GM13977 (cell line): ENCODE measurements at regions of chrX and their contacts with region 1.

Region 1: DNA sequence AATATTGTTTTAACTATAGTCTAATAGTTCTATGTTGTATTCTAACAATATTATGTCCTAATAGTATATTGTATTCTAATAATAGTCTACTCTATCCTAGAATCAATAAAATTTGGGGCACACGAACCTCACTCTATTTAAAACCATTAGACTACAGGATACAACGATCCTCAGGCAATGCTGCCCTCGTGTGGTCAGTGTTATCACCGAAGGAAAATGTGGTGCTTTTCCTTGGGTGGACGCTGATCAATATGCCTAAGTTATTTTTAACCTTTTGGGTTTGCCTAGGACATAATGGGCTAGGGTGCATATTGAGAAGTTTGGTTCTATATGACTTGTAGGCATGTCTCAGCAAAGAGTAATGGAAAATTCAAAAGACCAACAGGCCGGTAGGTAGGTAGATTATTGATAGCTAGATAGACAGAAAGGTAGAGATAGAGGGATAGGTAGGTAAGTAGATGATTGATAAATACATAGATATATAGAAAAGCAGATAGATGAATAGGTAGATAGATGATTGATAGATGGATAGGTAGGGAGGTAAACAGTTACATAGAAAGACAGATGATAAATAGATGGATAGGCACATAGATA is 75.1 kb downstream of the PRKX start:
- DNase-seq: peak; percentile 74
- CTCF ChIP-seq: peak; percentile 76

Region 2: DNA sequence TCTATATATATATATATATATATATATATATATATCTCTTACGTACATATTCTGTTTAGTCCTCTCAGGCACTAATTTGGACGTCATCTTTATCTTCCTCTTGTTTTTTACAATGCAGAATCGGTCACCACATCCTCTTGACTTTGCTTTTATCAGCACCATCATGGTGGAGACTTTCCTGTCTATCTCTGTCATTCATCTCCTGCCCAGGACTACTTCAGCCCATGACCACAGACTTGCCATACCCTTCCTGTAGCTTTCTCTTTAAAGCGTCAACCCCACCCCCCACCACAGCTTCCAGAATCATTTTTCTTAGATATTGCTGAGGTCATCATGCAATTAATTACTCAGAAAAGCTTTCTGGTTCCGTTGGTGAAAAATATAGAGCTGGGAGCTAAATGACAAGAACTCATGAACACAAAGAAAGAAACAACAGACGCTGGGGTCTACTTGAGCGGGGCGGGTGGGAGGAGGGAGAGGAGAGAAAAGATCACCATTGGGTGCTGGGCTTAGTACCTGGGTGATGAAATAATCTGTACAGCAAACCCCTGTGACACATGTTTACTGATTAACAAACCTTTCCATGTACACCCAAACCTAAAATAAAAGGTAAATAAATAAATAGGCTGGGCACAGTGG is 105.5 kb after region 1 on chrX:
- in situ Hi-C with region 1: loop called (anchors 25 kb)
- DNase-seq: no peak
- CTCF ChIP-seq: no peak